BJ (cell line): ENCODE measurements at regions of chr2 and their contacts with region 1.

Region 1: DNA sequence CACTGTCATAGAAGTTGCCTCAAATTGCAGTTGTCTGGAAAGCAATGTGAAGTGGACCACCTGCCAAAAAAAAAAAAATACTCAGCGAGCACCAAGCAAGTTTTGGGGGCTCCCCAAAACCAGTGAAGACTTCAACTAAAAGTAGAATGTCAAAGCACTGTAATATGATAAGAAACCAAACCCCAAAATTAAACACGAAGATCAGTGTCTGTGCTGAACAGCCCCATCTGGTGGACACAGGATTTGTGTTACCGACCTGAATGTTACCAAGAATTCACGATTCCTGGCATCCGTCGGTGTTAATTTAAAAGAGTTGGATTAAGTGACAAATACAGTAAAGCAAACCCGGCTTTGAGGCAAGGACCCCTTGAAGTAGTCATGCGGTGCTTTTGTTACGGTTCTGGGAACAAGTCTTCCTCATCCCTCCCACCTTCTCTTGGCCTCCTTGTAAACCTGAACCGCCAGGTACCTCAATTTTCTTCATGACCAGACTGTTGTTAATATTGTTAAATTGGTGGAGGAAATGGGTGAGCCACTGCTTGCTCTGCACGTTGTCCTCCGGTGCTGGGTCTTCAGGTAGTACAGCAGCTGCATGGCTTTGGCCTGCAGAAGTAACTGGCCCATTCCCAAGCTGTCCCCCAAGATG is 31.3 kb upstream of the SSB start:
- DNase-seq: no peak
- H3K4me3 ChIP-seq: no peak overlapping the region
- H3K27me3 ChIP-seq: peaks cover 8% of the 10 kb centered on the region
- CTCF ChIP-seq: peak; percentile 74

Region 2: DNA sequence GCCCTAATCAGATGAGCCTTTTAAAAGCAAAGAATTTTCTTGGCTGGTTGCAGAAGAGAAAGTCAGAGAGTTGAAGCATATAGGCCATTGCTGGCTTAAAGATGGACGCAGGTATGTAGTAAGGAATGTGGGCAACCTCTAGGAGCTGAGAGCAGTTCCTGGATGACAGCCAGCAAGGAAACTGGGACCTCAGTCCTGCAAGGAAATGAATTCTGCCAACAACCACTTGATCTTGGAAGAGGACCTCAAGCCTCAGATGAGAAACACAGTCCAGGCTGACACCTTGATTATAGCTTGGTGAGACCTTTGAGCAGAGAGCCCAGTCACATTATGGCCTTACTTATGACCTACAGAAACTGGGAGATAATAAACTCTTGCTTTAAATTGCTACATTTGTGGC is 57.4 kb before region 1 on chr2:
- CTCF ChIA-PET with region 1: no interaction called
- POLR2A ChIA-PET with region 1: interaction called, 34 read pairs
- DNase-seq: no peak
- H3K4me3 ChIP-seq: no peak overlapping the region
- H3K27me3 ChIP-seq: no peaks in the 10 kb centered on the region
- CTCF ChIP-seq: no peak